Activated CD4-positive, alpha-beta memory T cell treated with anti-CD3 and anti-CD28 coated beads for 36 hours (primary cell): ENCODE measurements at regions of chr14 and their contacts with region 1.

Region 1: DNA sequence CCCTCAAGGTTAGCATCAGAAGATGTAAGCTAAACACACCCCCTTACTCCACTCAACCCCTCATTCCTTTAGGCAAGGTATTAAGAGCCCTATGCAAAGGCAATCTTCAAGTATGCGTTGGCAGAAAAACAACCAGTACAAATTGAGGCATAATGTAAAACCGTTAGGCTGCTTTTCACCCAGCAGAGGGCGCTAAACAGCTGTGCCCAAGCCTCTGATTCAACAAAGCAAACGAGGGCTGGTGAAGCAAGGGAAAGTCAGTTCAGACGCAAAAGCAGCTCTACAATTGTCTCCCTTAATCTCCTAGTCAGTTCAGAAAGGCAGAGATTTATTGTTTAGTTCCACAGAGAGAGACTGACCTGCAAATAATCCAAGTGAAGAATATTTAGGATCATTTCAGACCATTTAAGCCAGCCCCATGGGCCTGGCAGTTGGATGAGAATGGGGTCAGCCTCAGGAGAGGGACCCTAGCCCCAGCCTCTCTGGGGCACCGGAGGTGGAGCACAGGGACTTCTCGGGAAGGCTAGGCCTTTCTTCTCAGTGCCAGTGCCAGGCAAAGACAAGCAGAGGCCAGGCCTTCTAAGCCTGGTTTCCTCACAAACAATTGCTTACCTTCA is 23.5 kb downstream of the DCAF5 start:
- DNase-seq: peak; percentile 81
- H3K4me3 Mint-ChIP-seq: no peak overlapping the region
- H3K27ac Mint-ChIP-seq: peak overlapping the region; percentile 31
- H3K4me1 Mint-ChIP-seq: peaks cover 59% of the 10 kb centered on the region
- H3K27me3 Mint-ChIP-seq: no peaks in the 10 kb centered on the region

Region 2: GRCh38 chr14:69117020-69117767 is 12.2 kb before region 1 on chr14:
- CTCF ChIA-PET with region 1: interaction called, 23 read pairs
- POLR2A ChIA-PET with region 1: no interaction called
- intact Hi-C with region 1: no loop called
- DNase-seq: no peak
- H3K4me3 Mint-ChIP-seq: no peak overlapping the region
- H3K27ac Mint-ChIP-seq: no peak overlapping the region
- H3K4me1 Mint-ChIP-seq: peaks cover 30% of the 10 kb centered on the region
- H3K27me3 Mint-ChIP-seq: no peaks in the 10 kb centered on the region

Region 3: GRCh38 chr14:69153131-69153872 is 23.9 kb after region 1 on chr14:
- CTCF ChIA-PET with region 1: interaction called, 146 read pairs
- POLR2A ChIA-PET with region 1: interaction called, 5 read pairs
- intact Hi-C with region 1: loop called (anchors 1 kb)
- DNase-seq: peak; percentile 96
- H3K4me3 Mint-ChIP-seq: peak overlapping the region; percentile 91
- H3K27ac Mint-ChIP-seq: peak overlapping the region; percentile 92
- H3K4me1 Mint-ChIP-seq: peaks cover 33% of the 10 kb centered on the region
- H3K27me3 Mint-ChIP-seq: no peaks in the 10 kb centered on the region

Region 4: DNA sequence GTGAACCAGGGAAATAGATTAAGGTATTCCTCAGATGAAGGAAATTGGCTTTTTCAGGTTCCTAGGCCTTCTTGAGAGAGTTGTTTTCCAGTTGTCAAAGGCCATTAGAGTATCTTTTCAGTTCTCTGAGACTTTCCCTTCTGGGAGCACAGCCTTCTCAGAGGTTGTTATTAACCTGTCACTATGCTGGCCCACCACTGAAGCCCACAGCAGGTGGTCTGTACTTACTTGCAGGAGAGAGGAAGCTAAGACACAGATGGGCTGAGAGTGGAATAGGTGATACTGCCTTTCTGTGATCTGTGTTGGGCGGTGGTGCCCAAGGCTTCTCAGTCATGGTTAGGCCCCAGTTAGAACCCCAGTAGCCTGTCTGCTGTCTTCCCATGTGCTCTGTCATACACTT is 107.8 kb after region 1 on chr14:
- CTCF ChIA-PET with region 1: interaction called, 40 read pairs
- POLR2A ChIA-PET with region 1: interaction called, 3 read pairs
- intact Hi-C with region 1: loop called (anchors 5 kb)
- DNase-seq: no peak
- H3K4me3 Mint-ChIP-seq: no peak overlapping the region
- H3K27ac Mint-ChIP-seq: no peak overlapping the region
- H3K4me1 Mint-ChIP-seq: peaks cover 6% of the 10 kb centered on the region
- H3K27me3 Mint-ChIP-seq: no peaks in the 10 kb centered on the region

Region 5: DNA sequence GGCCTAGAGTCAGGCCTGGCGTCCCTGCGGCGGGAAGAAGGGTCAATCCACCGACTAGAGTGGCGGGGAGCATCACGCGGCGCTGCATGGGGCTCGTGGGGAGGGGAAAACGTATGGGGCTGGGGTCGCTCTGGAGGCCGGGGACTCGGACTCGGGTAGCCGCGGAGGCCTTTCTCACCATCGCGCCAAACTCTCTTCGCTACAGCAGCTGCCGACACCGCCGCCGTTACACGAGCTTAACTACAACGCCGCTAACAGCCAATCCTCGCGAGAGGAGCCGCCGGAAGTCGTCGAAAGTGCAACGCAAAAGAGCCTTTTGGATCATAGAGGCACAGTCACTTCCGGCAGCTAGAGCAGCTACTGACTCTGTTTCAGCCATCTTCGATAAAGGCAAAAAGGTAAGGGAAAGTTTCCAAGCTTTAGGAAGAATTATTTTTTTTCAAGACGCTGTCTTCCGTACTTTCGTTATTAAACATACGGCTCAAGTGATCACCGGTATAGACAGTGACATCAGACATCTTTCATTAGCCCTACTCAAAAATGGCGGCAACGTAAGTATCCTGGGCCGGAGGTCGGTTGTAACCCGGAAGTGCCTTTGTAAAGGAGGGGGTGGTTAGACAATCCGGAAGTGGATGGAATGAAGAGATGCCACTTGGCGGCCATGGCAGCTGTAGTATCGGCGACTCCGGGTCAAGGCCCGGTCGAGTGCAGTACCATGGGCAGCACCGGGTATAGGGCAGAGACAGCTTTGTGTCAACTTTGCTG is 268.9 kb after region 1 on chr14 and contains the starts of genes ERH and SLC39A9:
- CTCF ChIA-PET with region 1: no interaction called
- POLR2A ChIA-PET with region 1: no interaction called
- intact Hi-C with region 1: loop called (anchors 10 kb)
- DNase-seq: peak; percentile 96
- H3K4me3 Mint-ChIP-seq: peak within 1 kb of the TSS; percentile 97
- H3K27ac Mint-ChIP-seq: peak within 1 kb of the TSS; percentile 100
- H3K4me1 Mint-ChIP-seq: peaks cover 67% of the 10 kb centered on the region
- H3K27me3 Mint-ChIP-seq: no peaks in the 10 kb centered on the region
- total RNA-seq, gene ERH: 327 to 330 TPM
- total RNA-seq, gene SLC39A9: 39.3 to 40.3 TPM

Region 6: GRCh38 chr14:69766984-69767368 is 637.6 kb after region 1 on chr14 and contains the start of gene SRSF5:
- CTCF ChIA-PET with region 1: no interaction called
- POLR2A ChIA-PET with region 1: no interaction called
- intact Hi-C with region 1: loop called (anchors 10 kb)
- DNase-seq: peak; percentile 96
- H3K4me3 Mint-ChIP-seq: peak within 1 kb of the TSS; percentile 99
- H3K27ac Mint-ChIP-seq: peak within 1 kb of the TSS; percentile 99
- H3K4me1 Mint-ChIP-seq: peaks cover 73% of the 10 kb centered on the region
- H3K27me3 Mint-ChIP-seq: no peaks in the 10 kb centered on the region
- total RNA-seq, gene SRSF5: 289 to 303 TPM